HEK293T (cell line): ENCODE measurements at regions of chr6 and their contacts with region 1.

Region 1: GRCh38 chr6:129498950-129499842 is 210.8 kb downstream of the ARHGAP18 start:
- DNase-seq: peak; percentile 50

Region 2: DNA sequence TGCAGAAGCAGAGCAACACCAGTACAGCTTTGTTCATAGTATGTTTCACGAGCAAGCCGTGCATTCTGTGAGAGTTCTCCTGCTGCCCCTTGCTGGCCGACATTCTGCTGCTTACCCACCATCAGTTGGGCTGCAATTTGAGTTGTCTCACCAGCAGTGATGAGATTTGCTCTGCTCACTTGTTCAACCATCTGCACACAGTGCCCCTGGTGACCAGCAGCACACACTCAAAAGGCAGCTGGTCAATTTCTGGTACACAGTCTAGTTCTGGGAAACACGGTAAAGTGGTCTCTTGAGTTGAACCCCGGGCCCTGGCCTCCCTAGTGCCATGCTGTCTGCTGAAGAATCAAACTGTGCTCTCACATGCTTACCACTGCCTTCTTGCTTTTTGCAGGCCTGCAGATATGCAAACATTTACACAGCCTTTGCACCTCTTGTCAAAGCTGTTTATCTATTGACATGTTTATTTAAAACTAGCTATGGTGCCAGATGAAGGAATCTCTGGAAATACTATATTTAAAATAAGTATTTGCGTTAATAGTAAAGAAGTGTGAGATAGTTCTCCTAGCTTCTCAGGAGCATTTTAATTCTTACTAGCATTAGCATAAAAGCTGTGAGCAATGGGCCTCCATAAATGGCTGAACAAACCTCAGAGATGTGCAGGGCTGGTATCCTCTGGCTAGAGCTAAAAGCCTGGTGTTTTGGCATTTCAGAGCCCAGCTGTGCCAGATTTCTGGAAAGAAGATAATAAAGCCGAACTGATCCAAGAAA is 23.5 kb before region 1 on chr6:
- CTCF ChIA-PET with region 1: no interaction called
- POLR2A ChIA-PET with region 1: no interaction called
- DNase-seq: peak; percentile 16

Region 3: GRCh38 chr6:129567374-129567773 is 68.2 kb after region 1 on chr6:
- CTCF ChIA-PET with region 1: interaction called, 46 read pairs
- POLR2A ChIA-PET with region 1: no interaction called
- DNase-seq: peak; percentile 35

Region 4: DNA sequence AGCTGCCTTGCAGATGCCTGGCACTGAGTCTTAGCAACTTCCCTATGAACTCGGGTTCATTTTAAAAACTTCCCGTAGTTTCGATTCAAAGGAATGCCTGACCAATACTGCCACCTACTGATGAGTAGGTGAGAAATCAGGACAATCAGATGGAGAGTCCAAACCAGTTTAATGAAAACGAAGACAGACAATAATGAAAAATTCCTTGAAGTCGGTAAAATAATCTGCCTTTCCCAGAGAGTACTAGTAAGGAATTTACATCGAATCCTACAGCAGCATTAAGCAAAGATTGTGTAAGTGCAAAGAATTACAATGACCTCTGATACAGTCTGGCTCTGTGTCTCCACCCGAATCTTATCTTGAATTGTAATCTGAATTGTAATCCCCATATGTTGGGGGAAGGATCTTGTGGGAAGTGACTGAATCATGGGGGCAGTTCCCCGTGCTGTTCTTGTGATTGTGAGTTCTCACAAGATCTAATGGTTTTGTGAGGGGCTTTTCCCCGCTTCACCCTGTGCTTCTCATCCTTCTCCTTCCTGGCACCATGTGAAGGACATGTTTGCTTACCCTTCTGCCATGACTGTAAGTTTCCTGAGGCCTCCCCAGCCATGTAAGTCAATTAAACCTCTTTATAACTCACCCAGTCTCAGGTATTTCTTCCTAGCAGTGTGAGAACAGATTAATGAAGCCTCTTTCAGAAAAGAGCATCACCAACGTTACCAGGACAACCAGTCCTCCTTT is 76.4 kb after region 1 on chr6:
- CTCF ChIA-PET with region 1: interaction called, 17 read pairs
- POLR2A ChIA-PET with region 1: no interaction called
- DNase-seq: peak; percentile 66

Region 5: DNA sequence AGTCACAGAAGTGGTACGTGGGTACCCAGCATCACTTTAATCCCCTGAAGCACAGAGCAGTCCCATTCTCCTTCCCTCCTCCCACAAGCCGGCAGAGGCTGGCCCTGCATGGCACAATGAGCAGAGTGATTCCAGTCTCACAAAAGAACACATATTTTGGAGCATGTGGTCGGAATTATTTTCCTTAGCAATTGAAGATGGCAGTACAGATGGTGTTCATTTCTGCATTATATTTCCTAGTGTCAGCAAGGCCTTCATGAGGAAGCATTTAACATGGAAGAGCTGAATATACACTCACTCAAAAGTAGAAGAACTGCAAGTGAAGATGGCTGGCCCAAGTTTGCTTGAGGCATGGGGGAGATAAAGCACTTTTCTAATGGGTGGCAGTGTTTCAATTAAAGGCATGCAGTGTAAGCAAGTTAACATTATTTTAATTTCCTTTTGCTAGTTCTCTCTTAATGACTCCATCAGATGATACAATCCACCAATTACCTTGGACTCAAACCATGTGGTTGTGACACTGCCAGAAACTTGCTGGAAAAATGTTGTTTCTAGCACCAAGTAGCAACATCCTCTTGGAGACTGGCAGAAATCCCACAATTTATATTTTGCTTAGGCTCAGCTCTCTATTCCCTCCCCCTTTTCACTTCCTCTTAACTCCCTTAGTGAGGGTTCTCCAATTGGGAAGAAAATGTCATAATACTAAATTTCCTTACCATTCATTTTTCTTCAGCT is 136.4 kb after region 1 on chr6:
- CTCF ChIA-PET with region 1: no interaction called
- POLR2A ChIA-PET with region 1: no interaction called
- DNase-seq: no peak